ENCODE measurements at regions of chr17 and their contacts with region 1.

Region 1: DNA sequence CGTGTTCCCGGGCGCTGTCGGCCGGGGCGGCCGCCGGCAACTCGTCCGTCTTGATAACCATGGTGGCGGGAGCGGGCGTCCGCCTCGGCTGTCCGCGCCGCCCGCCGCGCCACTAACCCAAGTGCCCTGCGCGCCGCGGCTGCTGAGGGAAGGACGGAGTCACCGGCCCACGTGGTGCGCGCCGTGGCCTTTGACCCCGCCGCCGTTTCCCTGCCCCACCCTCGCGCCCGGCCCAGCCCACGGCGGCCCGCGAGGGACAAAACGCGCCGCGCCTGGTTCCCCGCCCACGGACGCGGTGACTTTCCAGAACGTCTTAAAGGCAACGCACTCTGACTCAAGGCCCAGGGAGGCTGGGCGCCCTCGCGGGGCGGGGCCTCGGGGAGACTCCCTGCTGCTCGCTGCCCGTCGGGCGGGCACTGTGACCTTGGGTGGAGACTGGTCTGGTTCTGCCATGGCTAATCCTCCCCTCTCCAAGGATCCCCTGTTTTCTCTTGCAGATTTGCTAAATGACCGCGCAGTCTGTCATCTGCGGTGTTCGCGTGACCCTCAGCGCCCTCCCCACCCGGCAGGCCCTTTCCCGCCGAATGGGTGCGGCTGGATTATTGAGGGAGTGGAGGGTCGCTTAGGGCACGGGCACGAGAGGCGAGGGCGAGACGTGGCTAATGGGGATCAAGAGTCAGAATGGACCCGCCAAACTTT is at the start of gene CLUH:
- DNase-seq: peak; percentile 94 to 98
- ATAC-seq: peak; percentile 52 to 61
- H3K4me3 ChIP-seq: peak within 1 kb of the TSS; percentile 65 to 84 (median 77)
- H3K27ac ChIP-seq: peak within 1 kb of the TSS; percentile 91 to 98 (median 96)
- H3K4me1 ChIP-seq: peaks cover 45 to 52% of the 10 kb centered on the region in 2 donors
- H3K27me3 ChIP-seq: no peaks in the 10 kb centered on the region
- CTCF ChIP-seq: peak in 1 of 5 experiments; percentile 49
- POLR2A ChIP-seq: peak; percentile 98 to 99
- total RNA-seq, gene CLUH: 104 to 286 (median 211) TPM

Region 2: GRCh38 chr17:1379930-1380313 is 1331.8 kb before region 1 on chr17:
- in situ Hi-C with region 1: no loop called
- intact Hi-C with region 1: no loop called
- DNase-seq: no peak
- ATAC-seq: no peak
- H3K4me3 ChIP-seq: no peak overlapping the region
- H3K27ac ChIP-seq: peak overlapping the region; percentile 48 to 98 (median 59)
- H3K4me1 ChIP-seq: peaks cover 84 to 85% of the 10 kb centered on the region in 2 donors
- H3K27me3 ChIP-seq: no peaks in the 10 kb centered on the region
- CTCF ChIP-seq: no peak
- POLR2A ChIP-seq: no peak

Region 3: DNA sequence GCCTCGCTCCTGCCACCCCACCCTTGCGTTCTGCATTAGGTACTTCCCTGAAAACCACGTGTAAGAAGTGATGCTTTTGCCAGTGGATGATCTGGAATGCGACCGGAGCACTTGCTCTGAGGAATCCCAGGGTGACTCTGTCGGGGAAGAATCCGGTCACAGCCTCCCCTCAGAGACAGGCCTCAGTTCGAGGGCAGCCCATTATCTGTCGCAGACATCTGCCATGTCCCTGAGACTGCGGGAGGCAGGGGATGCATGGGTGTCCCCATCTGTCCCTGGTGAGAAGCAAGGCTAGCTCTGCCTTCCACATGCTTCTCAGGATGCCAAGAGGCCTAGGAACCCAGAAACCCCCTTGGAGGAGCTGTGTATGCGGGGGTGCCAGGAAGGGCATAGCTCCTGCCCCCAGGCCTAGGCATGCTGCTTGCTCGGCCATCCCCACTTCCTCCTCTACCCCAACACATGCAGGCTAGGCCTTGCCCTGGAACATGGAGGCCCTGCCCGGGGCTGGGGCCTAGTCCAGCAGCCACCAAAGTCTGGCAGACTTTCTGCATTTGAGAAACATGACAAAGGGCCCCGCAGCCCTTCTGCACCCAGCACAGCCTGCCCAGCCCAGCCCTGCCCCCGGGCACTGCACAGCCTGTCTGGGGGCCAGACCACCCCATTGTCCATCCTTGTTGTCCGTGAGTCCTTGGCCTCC is 331.4 kb before region 1 on chr17:
- in situ Hi-C with region 1: no loop called
- intact Hi-C with region 1: loop called (anchors 5 kb)
- DNase-seq: no peak
- ATAC-seq: no peak
- H3K4me3 ChIP-seq: no peak overlapping the region
- H3K27ac ChIP-seq: no peak overlapping the region
- H3K4me1 ChIP-seq: peaks cover 24 to 31% of the 10 kb centered on the region in 2 donors
- H3K27me3 ChIP-seq: no peaks in the 10 kb centered on the region
- CTCF ChIP-seq: no peak
- POLR2A ChIP-seq: no peak

Region 4: GRCh38 chr17:2401426-2402221 is 310.1 kb before region 1 on chr17:
- in situ Hi-C with region 1: loop called in 1 of 4 experiments (anchors 25 kb)
- intact Hi-C with region 1: loop called (anchors 2 kb)
- DNase-seq: peak; percentile 100
- ATAC-seq: peak; percentile 44 to 50
- H3K4me3 ChIP-seq: peak overlapping the region; percentile 63 to 89 (median 85)
- H3K27ac ChIP-seq: peak overlapping the region; percentile 97 to 99 (median 99)
- H3K4me1 ChIP-seq: peaks cover 57% of the 10 kb centered on the region in 2 donors
- H3K27me3 ChIP-seq: no peaks in the 10 kb centered on the region
- CTCF ChIP-seq: no peak
- POLR2A ChIP-seq: no peak

Region 5: GRCh38 chr17:2511462-2512369 is 200.0 kb before region 1 on chr17 and contains the start of gene METTL16:
- in situ Hi-C with region 1: no loop called
- intact Hi-C with region 1: loop called (anchors 5 kb)
- DNase-seq: peak; percentile 95 to 96
- ATAC-seq: peak; percentile 100
- H3K4me3 ChIP-seq: peak within 1 kb of the TSS; percentile 66 to 81 (median 74)
- H3K27ac ChIP-seq: peak within 1 kb of the TSS; percentile 86 to 88 (median 88)
- H3K4me1 ChIP-seq: peaks cover 18 to 26% of the 10 kb centered on the region in 2 donors
- H3K27me3 ChIP-seq: no peaks in the 10 kb centered on the region
- CTCF ChIP-seq: no peak
- POLR2A ChIP-seq: peak; percentile 59 to 68
- total RNA-seq, gene METTL16: 18.2 to 59.7 (median 25.4) TPM

Region 6: GRCh38 chr17:2634361-2634960 is 77.3 kb before region 1 on chr17:
- in situ Hi-C with region 1: no loop called
- intact Hi-C with region 1: loop called (anchors 1 kb)
- DNase-seq: peak; percentile 83 to 90
- ATAC-seq: peak; percentile 90
- H3K4me3 ChIP-seq: no peak overlapping the region
- H3K27ac ChIP-seq: peak overlapping the region; percentile 79 to 93 (median 92)
- H3K4me1 ChIP-seq: peaks cover 61 to 76% of the 10 kb centered on the region in 2 donors
- H3K27me3 ChIP-seq: no peaks in the 10 kb centered on the region
- CTCF ChIP-seq: no peak
- POLR2A ChIP-seq: no peak

Measured in gastrocnemius medialis (tissue), 4 donors.